ENCODE measurements at regions of chr10 and their contacts with region 1.

Region 1: GRCh38 chr10:127458016-127458810 is 90.9 kb upstream of the NPS start:
- DNase-seq: no peak
- H3K4me3 Mint-ChIP-seq: no peak overlapping the region
- H3K27ac Mint-ChIP-seq: no peak overlapping the region
- H3K4me1 Mint-ChIP-seq: no peaks in the 10 kb centered on the region
- H3K27me3 Mint-ChIP-seq: peaks cover 2% of the 10 kb centered on the region
- CTCF ChIP-seq: no peak

Region 2: GRCh38 chr10:127441350-127442219 is 16.6 kb before region 1 on chr10:
- CTCF ChIA-PET with region 1: interaction called, 13 read pairs
- intact Hi-C with region 1: no loop called
- DNase-seq: peak; percentile 45
- H3K4me3 Mint-ChIP-seq: no peak overlapping the region
- H3K27ac Mint-ChIP-seq: no peak overlapping the region
- H3K4me1 Mint-ChIP-seq: peaks cover 13% of the 10 kb centered on the region
- H3K27me3 Mint-ChIP-seq: no peaks in the 10 kb centered on the region
- CTCF ChIP-seq: no peak

Measured in Calu3 (cell line).